Sigmoid colon (tissue), 7 donors: ENCODE measurements at regions of chr4 and their contacts with region 1.

Region 1: DNA sequence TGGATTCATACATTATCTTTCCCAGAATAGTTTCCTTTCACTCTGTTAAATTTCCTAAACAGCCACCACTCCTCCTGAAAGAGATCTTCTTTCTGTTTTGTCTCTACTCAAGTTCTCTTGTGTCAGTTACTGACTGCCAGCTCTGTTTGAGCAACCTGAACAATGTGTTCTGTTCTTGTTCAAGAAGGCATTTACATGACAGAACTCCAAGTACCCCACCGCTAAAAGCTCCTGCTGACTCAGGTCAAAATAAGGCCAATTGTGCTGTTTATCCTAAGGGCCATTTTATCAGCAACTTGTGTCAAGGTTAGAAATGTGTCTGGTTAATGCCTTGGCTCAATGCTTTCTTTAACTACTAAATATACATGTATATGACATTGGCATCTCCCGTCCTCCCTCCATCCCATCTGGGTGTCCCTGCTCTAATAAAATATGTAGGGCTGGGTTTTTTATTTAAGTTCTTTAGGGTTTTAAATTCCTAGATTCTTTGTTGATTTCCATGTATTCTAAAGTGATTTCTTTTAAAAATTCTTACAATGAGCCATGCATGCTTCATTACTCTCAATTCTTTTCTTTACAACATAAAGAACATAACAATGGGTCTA is 144.3 kb upstream of the PAQR3 start:
- DNase-seq: peak; percentile 84
- H3K4me3 ChIP-seq: peak overlapping the region in 3 of 4 donors; percentile 20 to 24 (median 22)
- H3K27ac ChIP-seq: peak overlapping the region; percentile 69 to 81 (median 77)
- H3K4me1 ChIP-seq: peaks cover 0 to 30% (median 9%) of the 10 kb centered on the region in 4 donors
- H3K27me3 ChIP-seq: no peaks in the 10 kb centered on the region
- CTCF ChIP-seq: no peak
- EP300 ChIP-seq: peak; percentile 95 to 99 (median 98)
- POLR2A ChIP-seq: no peak

Region 2: GRCh38 chr4:78951862-78952472 is 131.5 kb before region 1 on chr4:
- intact Hi-C with region 1: no loop called
- DNase-seq: no peak
- H3K4me3 ChIP-seq: no peak overlapping the region
- H3K27ac ChIP-seq: no peak overlapping the region
- H3K4me1 ChIP-seq: no peaks in the 10 kb centered on the region
- H3K27me3 ChIP-seq: no peaks in the 10 kb centered on the region
- CTCF ChIP-seq: peak; percentile 53 to 69 (median 64)
- EP300 ChIP-seq: no peak
- POLR2A ChIP-seq: no peak

Region 3: GRCh38 chr4:79049840-79050540 is 33.5 kb before region 1 on chr4:
- intact Hi-C with region 1: loop called (anchors 2 kb)
- DNase-seq: peak; percentile 81
- H3K4me3 ChIP-seq: peak overlapping the region in 3 of 4 donors; percentile 23 to 37 (median 28)
- H3K27ac ChIP-seq: peak overlapping the region in 3 of 4 donors; percentile 73 to 80 (median 76)
- H3K4me1 ChIP-seq: peaks cover 0 to 74% (median 55%) of the 10 kb centered on the region in 4 donors
- H3K27me3 ChIP-seq: no peaks in the 10 kb centered on the region
- CTCF ChIP-seq: no peak
- EP300 ChIP-seq: no peak
- POLR2A ChIP-seq: no peak

Region 4: GRCh38 chr4:79467246-79467932 is 383.9 kb after region 1 on chr4:
- intact Hi-C with region 1: loop called (anchors 10 kb)
- DNase-seq: no peak
- H3K4me3 ChIP-seq: no peak overlapping the region
- H3K27ac ChIP-seq: peak overlapping the region; percentile 1 to 64 (median 29)
- H3K4me1 ChIP-seq: peaks cover 0 to 24% (median 13%) of the 10 kb centered on the region in 4 donors
- H3K27me3 ChIP-seq: no peaks in the 10 kb centered on the region
- CTCF ChIP-seq: no peak
- EP300 ChIP-seq: no peak
- POLR2A ChIP-seq: no peak

Region 5: DNA sequence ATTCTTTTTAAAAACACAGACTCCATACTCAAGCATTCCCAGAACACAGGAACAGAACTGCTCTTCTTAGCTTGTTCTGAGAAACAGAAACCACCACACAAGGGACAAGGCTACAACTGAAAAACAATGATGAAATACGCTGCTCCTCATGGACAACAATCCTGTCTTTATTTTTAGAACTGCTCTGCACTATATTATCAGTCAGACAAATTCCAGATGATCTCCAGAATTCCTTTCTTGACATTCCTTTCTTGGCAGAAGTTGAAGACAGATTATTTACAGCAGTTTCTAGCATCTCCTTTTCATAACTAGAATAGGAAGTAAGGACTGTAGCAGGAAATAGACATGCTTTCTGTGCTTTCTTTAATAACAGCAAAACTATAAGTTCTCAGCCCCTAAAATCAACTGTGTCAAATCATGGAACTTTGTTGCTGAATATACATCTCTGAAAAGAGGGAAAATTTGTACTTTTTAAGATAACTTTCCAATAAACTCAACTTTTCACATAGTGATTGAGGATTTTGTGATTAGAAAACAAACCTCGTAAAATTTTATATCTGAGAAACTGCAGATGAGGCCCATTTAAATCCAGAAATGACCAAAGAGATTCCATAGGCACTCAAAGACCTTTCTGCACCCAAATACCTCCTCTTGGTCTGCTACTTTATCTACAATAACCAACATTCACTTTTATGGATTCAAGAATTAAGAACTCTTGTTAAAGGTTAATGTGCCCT is 953.6 kb after region 1 on chr4:
- intact Hi-C with region 1: loop called (anchors 5 kb)
- DNase-seq: no peak
- H3K4me3 ChIP-seq: peak overlapping the region in 3 of 4 donors; percentile 2 to 15 (median 5)
- H3K27ac ChIP-seq: peak overlapping the region; percentile 76 to 90 (median 84)
- H3K4me1 ChIP-seq: peaks cover 0 to 70% (median 53%) of the 10 kb centered on the region in 4 donors
- H3K27me3 ChIP-seq: no peaks in the 10 kb centered on the region
- CTCF ChIP-seq: no peak
- EP300 ChIP-seq: peak; percentile 38 to 88 (median 76)
- POLR2A ChIP-seq: no peak